Upper lobe of right lung (tissue), 1 donor: ENCODE measurements at regions of chr1 and their contacts with region 1.

Region 1: GRCh38 chr1:54406339-54407153 is at the start of gene SSBP3:
- DNase-seq: peak; percentile 96
- ATAC-seq: peak; percentile 97
- H3K4me3 ChIP-seq: peak within 1 kb of the TSS; percentile 64
- H3K27ac ChIP-seq: peak within 1 kb of the TSS; percentile 78
- H3K4me1 ChIP-seq: peaks cover 41% of the 10 kb centered on the region
- H3K27me3 ChIP-seq: no peaks in the 10 kb centered on the region
- CTCF ChIP-seq: no peak
- total RNA-seq, gene SSBP3: 40.4 TPM

Region 2: DNA sequence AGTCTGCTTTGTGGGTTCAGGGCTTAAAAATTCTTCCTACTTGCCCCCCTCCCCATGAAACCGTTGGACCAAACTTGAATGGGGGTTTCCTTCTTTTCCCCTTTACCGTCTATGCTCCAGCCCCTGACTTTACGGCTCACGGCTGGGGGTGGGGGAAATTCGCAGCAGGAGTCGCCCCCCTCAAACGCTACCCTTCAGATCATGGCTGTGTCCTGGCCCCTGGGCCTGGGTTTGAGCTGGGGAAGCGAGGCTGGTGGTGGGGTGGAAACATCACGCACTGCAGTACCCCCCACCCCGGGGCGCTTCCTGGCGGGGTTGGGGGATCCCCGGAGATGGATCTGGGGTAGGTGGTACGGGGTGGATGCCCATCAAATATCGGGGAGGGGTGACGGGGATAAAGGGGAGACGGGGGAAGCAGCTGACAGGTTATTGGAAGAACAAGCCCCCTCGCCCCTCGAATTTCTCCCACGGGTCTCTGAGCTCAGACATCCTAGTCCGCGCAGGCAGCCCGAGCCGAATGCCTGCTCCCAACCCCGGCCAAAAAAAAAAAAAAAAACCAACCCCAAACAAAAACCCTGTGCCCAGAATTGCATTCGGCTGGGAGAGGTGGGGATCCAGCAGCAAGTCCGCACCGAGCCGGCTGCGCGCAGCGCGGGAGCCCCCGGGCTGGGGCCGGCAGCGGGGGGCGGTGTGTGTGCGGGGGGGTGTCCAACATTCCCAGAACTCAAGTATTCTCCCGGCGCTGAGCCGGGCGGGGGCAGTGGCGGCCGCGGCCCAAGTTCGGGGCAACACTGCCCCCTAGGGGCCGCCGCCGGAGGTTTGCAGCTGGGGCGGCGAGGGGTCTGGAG is 82.5 kb after region 1 on chr1:
- intact Hi-C with region 1: loop called (anchors 5 kb)
- DNase-seq: peak; percentile 91
- ATAC-seq: peak; percentile 87
- H3K4me3 ChIP-seq: peak overlapping the region; percentile 66
- H3K27ac ChIP-seq: peak overlapping the region; percentile 88
- H3K4me1 ChIP-seq: peaks cover 21% of the 10 kb centered on the region
- H3K27me3 ChIP-seq: peaks cover 5% of the 10 kb centered on the region
- CTCF ChIP-seq: peak; percentile 99